GM12878 (cell line): ENCODE measurements at regions of chr5 and their contacts with region 1.

Region 1: DNA sequence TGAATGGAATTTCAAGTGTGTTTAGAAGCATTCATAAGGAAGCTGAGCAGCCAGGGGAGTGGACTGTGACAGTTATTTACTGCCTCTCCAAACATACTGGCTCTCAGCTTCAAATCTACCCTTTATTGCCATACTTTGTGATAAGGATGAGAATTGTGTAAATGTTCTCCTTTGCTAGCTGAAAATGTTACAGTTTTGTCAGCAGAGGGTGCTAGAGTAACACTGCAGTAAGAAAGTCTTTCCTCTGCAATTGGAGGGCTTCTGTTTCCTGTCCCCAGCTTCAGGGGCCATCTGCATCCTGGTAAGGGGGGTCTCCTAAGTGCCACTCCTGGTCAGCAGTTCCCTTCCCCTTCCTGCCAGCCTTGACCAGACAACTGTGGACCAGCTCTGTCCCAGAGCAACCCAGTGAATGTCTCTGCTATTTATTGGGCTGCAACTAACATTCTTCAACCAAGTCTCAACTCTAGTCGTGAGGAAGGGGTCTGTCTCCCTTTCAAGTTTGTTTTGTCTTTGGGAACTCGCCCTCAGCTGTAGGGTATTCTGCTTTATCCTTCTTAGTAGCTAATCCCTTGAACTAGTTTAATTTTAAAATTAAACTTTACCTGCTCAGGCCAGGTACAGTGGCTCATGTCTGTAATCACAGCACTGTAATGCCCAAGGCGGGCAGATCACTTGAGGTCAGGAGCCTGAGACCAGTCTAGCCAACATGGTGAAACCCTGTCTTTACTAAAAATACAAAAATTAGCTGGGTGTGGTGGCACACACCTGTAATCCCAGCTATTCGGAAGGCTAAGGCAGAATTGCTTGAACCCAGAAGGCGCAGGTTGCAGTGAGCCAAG is 45.3 kb downstream of the RAPGEF6 start:
- DNase-seq: peak; percentile 23
- ATAC-seq: peak; percentile 84
- H3K4me3 ChIP-seq: no peak overlapping the region
- H3K27ac ChIP-seq: no peak overlapping the region
- H3K4me1 ChIP-seq: peaks cover 2% of the 10 kb centered on the region; the same call in 1 of the 2 replicates
- H3K27me3 ChIP-seq: no peaks in the 10 kb centered on the region
- CTCF ChIP-seq: peak; percentile 83 to 85 (median 83)
- EP300 ChIP-seq: no peak
- POLR2A ChIP-seq: no peak
- RAD21 ChIP-seq: peak; percentile 96

Region 2: GRCh38 chr5:131460867-131461572 is 128.7 kb before region 1 on chr5:
- CTCF ChIA-PET with region 1: no interaction called
- POLR2A ChIA-PET with region 1: no interaction called
- RAD21 ChIA-PET with region 1: no interaction called
- SMC1A ChIA-PET with region 1: no interaction called
- in situ Hi-C with region 1: no loop called
- intact Hi-C with region 1: no loop called
- DNase-seq: no peak
- ATAC-seq: no peak
- H3K4me3 ChIP-seq: no peak overlapping the region
- H3K27ac ChIP-seq: no peak overlapping the region
- H3K4me1 ChIP-seq: no peaks in the 10 kb centered on the region
- H3K27me3 ChIP-seq: no peaks in the 10 kb centered on the region
- CTCF ChIP-seq: no peak
- EP300 ChIP-seq: no peak
- POLR2A ChIP-seq: no peak
- RAD21 ChIP-seq: no peak

Region 3: DNA sequence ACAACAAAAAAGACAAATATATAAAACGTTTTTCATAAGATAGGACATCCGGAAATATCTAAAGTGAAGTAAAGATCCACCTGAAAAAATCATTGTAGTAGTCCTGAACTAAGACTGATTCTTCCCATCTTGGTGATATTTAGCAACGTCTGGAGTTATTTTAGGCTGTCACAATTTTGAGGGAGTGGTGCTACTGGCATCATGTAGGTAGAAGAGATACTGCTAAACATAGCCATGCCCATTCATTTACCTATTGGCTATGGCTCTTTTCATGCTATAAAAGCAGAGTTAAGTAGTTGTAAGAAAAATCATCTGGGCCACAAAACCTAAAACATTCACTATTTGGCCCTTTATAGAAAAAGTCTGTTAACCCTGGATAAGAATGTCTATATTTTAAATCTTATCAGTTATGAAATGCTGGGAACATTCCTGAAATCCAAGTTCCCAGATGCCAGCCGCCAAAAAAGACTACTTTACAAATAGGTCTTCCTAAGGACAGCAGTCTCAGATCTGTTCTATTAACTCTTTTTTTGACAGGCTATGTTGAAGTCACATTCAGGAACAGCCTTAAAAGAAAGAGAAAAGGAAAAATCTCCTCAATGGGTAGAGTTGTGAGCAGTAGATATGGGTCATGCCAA is 18.3 kb after region 1 on chr5:
- CTCF ChIA-PET with region 1: interaction called, 11 read pairs
- POLR2A ChIA-PET with region 1: no interaction called
- RAD21 ChIA-PET with region 1: interaction called, 3 read pairs
- SMC1A ChIA-PET with region 1: interaction called, 5 read pairs
- in situ Hi-C with region 1: no loop called
- intact Hi-C with region 1: no loop called
- DNase-seq: no peak
- ATAC-seq: no peak
- H3K4me3 ChIP-seq: no peak overlapping the region
- H3K27ac ChIP-seq: no peak overlapping the region; the same call in 1 of the 2 replicates
- H3K4me1 ChIP-seq: peaks cover 4% of the 10 kb centered on the region
- H3K27me3 ChIP-seq: no peaks in the 10 kb centered on the region
- CTCF ChIP-seq: no peak
- EP300 ChIP-seq: no peak
- POLR2A ChIP-seq: no peak
- RAD21 ChIP-seq: no peak

Region 4: GRCh38 chr5:131640043-131640856 is 50.5 kb after region 1 on chr5:
- CTCF ChIA-PET with region 1: interaction called, 13 read pairs
- POLR2A ChIA-PET with region 1: interaction called, 4 read pairs
- RAD21 ChIA-PET with region 1: interaction called, 8 read pairs
- SMC1A ChIA-PET with region 1: interaction called, 38 read pairs
- in situ Hi-C with region 1: no loop called
- intact Hi-C with region 1: no loop called
- DNase-seq: no peak
- ATAC-seq: peak; percentile 74
- H3K4me3 ChIP-seq: no peak overlapping the region
- H3K27ac ChIP-seq: peak overlapping the region; percentile 57
- H3K4me1 ChIP-seq: peaks cover 26% of the 10 kb centered on the region
- H3K27me3 ChIP-seq: no peaks in the 10 kb centered on the region
- CTCF ChIP-seq: no peak
- EP300 ChIP-seq: no peak
- POLR2A ChIP-seq: no peak
- RAD21 ChIP-seq: no peak

Region 5: GRCh38 chr5:131664929-131665328 is 75.2 kb after region 1 on chr5:
- CTCF ChIA-PET with region 1: no interaction called
- POLR2A ChIA-PET with region 1: no interaction called
- RAD21 ChIA-PET with region 1: no interaction called
- SMC1A ChIA-PET with region 1: no interaction called
- in situ Hi-C with region 1: no loop called
- intact Hi-C with region 1: no loop called
- DNase-seq: no peak
- ATAC-seq: no peak
- H3K4me3 ChIP-seq: no peak overlapping the region
- H3K27ac ChIP-seq: no peak overlapping the region
- H3K4me1 ChIP-seq: no peaks in the 10 kb centered on the region
- H3K27me3 ChIP-seq: no peaks in the 10 kb centered on the region
- CTCF ChIP-seq: no peak
- EP300 ChIP-seq: no peak
- POLR2A ChIP-seq: no peak
- RAD21 ChIP-seq: no peak

Region 6: GRCh38 chr5:131694926-131695325 is 105.2 kb after region 1 on chr5:
- CTCF ChIA-PET with region 1: interaction called, 17 read pairs
- POLR2A ChIA-PET with region 1: no interaction called
- RAD21 ChIA-PET with region 1: interaction called, 5 read pairs
- SMC1A ChIA-PET with region 1: interaction called, 3 read pairs
- in situ Hi-C with region 1: no loop called
- intact Hi-C with region 1: loop called (anchors 10 kb)
- DNase-seq: no peak
- ATAC-seq: no peak
- H3K4me3 ChIP-seq: no peak overlapping the region
- H3K27ac ChIP-seq: no peak overlapping the region
- H3K4me1 ChIP-seq: no peaks in the 10 kb centered on the region
- H3K27me3 ChIP-seq: no peaks in the 10 kb centered on the region
- CTCF ChIP-seq: no peak
- EP300 ChIP-seq: no peak
- POLR2A ChIP-seq: no peak
- RAD21 ChIP-seq: no peak

Region 7: DNA sequence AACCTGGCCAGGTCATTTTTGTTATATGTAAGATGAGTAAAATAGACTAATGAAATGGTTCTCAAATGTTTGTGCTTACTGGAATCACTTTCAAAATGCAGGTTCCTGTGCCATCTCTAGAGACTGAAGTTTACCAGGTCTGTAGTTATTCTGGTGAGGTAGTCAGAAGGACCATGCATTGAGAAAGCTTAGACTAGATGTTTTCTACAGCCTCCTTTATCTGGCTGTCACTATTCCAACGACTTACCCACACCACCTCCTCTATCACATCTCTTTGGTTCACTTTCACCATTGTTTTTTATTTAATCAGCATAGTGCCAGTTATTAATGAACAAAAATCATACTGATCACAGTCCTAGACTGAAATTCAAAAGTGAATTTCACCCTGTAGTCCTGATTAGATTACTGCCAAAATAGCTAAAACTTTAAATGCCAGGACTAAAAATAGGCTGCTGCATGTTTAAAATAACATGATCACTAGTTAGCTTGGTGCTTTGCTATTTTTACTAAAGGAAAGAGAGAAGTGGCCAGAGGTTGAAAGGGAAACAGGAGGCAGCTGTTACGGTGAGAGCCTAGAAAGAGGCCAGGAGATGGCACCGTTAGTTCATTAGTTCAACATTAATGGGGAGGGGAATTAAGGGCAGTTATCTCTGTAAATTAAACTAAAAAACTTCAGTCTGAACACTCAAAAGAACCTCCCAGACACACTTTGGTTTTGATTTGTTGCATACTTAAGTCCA is 221.0 kb after region 1 on chr5:
- CTCF ChIA-PET with region 1: interaction called, 27 read pairs
- POLR2A ChIA-PET with region 1: no interaction called
- RAD21 ChIA-PET with region 1: interaction called, 16 read pairs
- SMC1A ChIA-PET with region 1: interaction called, 17 read pairs
- in situ Hi-C with region 1: no loop called
- intact Hi-C with region 1: loop called (anchors 5 kb)
- DNase-seq: no peak
- ATAC-seq: peak; percentile 75
- H3K4me3 ChIP-seq: no peak overlapping the region
- H3K27ac ChIP-seq: no peak overlapping the region
- H3K4me1 ChIP-seq: peaks cover 5% of the 10 kb centered on the region; the same call in 1 of the 2 replicates
- H3K27me3 ChIP-seq: no peaks in the 10 kb centered on the region
- CTCF ChIP-seq: peak; percentile 18 to 52 (median 42); a peak in 4 of 6 replicates
- EP300 ChIP-seq: no peak
- POLR2A ChIP-seq: no peak
- RAD21 ChIP-seq: peak; percentile 77

Region 8: GRCh38 chr5:132064738-132065331 is 475.1 kb after region 1 on chr5:
- CTCF ChIA-PET with region 1: interaction called, 72 read pairs
- POLR2A ChIA-PET with region 1: no interaction called
- RAD21 ChIA-PET with region 1: interaction called, 14 read pairs
- SMC1A ChIA-PET with region 1: interaction called, 31 read pairs
- in situ Hi-C with region 1: no loop called
- intact Hi-C with region 1: loop called (anchors 1 kb)
- DNase-seq: peak; percentile 45
- ATAC-seq: peak; percentile 91
- H3K4me3 ChIP-seq: no peak overlapping the region
- H3K27ac ChIP-seq: no peak overlapping the region
- H3K4me1 ChIP-seq: no peaks in the 10 kb centered on the region; the same call in 1 of the 2 replicates
- H3K27me3 ChIP-seq: no peaks in the 10 kb centered on the region; a peak in 1 of 4 replicates
- CTCF ChIP-seq: peak; percentile 93 to 97 (median 97)
- EP300 ChIP-seq: no peak
- POLR2A ChIP-seq: no peak
- RAD21 ChIP-seq: peak; percentile 90